Ascending aorta (tissue), 2 donors: ENCODE measurements at regions of chr17 and their contacts with region 1.

Region 1: DNA sequence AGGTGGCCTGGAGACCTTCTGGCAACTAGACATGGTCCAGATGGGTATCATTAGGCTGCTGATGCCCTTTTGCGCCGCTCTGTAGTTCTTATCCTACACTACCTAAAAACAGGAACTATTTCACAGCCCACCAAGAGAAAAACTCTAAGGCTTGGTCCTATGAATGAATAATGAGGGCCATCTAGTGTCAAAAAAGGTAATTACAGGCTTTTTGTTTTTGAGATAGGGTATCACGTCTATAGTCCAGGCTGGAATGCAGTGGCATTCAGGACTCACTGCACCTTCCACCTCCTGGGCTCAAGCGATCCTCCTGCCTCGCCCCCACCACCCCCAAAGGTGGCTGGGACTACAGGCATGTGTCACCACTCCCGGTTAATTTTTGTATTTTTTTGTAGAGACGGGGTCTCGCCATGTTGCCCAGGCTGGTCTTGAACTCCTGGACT is 20.9 kb downstream of the COIL start:
- DNase-seq: no peak
- H3K4me3 ChIP-seq: no peak overlapping the region
- H3K27ac ChIP-seq: no peak overlapping the region
- H3K4me1 ChIP-seq: no peaks in the 10 kb centered on the region
- H3K27me3 ChIP-seq: no peaks in the 10 kb centered on the region
- CTCF ChIP-seq: peak; percentile 51 to 71 (median 65)

Region 2: DNA sequence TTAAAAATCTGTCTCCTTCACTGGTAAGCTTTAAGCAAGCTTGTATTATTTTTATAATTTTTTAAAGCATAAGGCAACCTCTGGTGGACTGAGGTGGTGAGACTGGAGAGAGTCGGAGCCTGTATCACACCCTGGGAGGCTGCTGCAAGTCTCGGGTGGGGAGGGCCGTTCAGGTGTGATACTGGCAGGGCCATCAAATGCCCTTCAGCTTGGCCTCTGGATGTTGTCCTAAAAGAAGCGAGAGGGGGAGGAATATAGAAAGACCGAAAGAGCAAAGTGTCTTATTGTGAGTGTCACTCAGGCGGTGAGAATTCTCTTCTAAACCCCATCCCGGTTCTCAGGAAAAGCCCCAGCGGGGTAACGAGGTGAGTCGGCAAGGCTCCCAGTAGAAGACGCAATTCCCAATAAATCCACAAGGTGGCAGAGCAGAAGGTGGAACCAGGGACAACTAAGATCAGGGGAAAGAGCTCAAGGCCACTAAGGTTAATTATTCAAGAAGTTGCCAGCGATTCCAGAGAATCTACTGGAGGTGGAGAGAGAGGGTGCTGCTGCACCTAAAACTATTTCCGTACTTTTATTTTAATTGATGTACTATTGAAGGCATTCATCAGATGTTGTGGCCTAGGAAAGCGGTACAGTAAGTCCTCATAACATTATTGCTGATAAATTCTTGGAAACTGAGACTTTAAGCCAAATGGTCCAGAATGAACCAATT is 120.3 kb before region 1 on chr17:
- intact Hi-C with region 1: loop called (anchors 1 kb)
- DNase-seq: peak in 1 of 2 donors; percentile 77
- H3K4me3 ChIP-seq: no peak overlapping the region
- H3K27ac ChIP-seq: no peak overlapping the region
- H3K4me1 ChIP-seq: no peaks in the 10 kb centered on the region
- H3K27me3 ChIP-seq: no peaks in the 10 kb centered on the region
- CTCF ChIP-seq: peak; percentile 76 to 89 (median 81)

Region 3: DNA sequence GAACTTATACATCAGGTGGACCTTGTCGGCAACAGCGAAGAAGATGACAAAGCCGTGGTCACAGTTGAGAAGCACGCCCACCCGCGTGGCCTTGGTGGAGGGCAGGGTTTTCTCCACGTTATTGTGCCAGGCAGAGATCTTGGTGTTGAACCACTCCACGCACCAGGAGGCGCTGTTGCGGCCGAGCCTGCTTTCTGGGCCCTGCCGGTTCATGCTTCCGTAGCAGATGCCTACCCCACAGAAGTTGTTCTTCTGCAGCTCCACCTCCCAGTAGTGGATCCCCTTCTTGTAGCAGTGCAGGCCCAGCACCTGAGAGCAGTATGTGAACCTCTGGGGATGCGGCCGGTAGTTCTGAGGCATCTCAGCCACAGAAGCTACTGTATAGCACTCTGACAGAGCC is 48.1 kb before region 1 on chr17:
- intact Hi-C with region 1: loop called (anchors 2 kb)
- DNase-seq: no peak
- H3K4me3 ChIP-seq: no peak overlapping the region
- H3K27ac ChIP-seq: no peak overlapping the region
- H3K4me1 ChIP-seq: no peaks in the 10 kb centered on the region
- H3K27me3 ChIP-seq: no peaks in the 10 kb centered on the region
- CTCF ChIP-seq: peak; percentile 13 to 49 (median 36)